ENCODE measurements at regions of chr4 and their contacts with region 1.

Region 1: GRCh38 chr4:137463377-137464003 is 68.8 kb downstream of the PCDH18 start:
- DNase-seq: no peak
- ATAC-seq: no peak
- H3K4me3 ChIP-seq: no peak overlapping the region
- H3K27ac ChIP-seq: no peak overlapping the region
- H3K4me1 ChIP-seq: no peaks in the 10 kb centered on the region
- H3K27me3 ChIP-seq: no peaks in the 10 kb centered on the region
- CTCF ChIP-seq: no peak

Region 2: DNA sequence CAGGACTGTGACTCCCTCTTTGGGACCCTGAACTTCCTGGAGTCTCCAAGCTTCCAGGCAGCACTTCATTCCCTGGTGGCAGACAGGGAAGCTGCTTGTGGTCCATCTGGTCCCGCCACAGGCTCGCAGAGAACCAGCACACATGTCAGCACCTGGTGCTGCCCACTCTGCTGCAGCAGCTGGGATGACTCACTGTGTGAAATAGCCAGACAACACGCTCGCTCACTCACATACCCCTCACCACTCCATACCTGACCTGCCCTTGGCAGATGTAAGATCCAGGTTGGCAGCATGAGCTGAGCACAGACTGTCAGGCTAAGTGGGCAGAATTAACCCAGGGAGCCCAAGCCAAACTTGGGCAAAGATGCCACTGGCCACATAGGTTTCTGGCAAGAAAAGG is 544.7 kb before region 1 on chr4:
- intact Hi-C with region 1: no loop called
- DNase-seq: no peak
- ATAC-seq: no peak
- H3K4me3 ChIP-seq: no peak overlapping the region
- H3K27ac ChIP-seq: no peak overlapping the region
- H3K4me1 ChIP-seq: no peaks in the 10 kb centered on the region
- H3K27me3 ChIP-seq: no peaks in the 10 kb centered on the region
- CTCF ChIP-seq: no peak

Region 3: DNA sequence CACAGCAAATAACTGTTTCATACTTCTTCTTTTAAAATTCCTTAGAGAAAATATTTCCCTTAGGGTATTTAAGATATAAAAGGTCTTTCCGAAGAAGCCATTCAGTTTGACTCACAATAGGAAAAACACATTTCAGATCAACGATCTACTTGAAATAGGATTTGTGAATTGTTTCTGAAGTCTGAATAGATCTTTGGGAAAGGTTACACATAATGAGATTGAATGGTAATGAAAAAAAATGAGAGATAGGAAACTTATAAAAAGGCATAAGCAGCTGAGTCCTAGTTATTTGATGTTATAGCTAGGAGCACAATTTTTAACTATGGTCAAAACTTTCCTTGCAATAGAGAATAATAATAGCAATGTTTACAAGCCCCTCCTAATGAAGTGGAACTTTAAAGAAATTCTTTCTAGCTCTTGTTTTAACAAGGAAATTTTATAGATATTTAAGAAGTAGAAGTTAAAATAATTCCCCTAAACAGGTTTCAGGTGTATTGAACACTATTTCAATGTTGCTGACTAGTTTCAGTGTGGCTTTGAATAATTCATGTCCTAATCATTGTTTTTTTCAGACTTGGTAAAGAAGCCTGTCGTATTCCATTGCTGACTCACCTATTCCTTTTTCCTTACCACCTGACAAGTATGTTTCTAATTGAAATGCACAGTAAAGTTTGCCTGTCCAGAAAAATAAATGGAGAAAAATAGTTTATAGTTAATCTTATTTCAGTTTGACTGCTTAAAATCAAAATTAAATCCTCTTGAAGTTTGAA is 20.3 kb before region 1 on chr4:
- intact Hi-C with region 1: loop called in 1 of 10 experiments (anchors 2 kb)
- DNase-seq: no peak
- ATAC-seq: no peak
- H3K4me3 ChIP-seq: no peak overlapping the region
- H3K27ac ChIP-seq: no peak overlapping the region
- H3K4me1 ChIP-seq: no peaks in the 10 kb centered on the region
- H3K27me3 ChIP-seq: no peaks in the 10 kb centered on the region
- CTCF ChIP-seq: no peak

Measured in heart right ventricle (tissue), 16 donors.